ENCODE measurements at regions of chrX and their contacts with region 1.

Region 1: GRCh38 chrX:24259544-24260240 is 54.2 kb downstream of the SUPT20HL2 start:
- DNase-seq: peak; percentile 82
- H3K4me3 ChIP-seq: no peak overlapping the region
- H3K27ac ChIP-seq: no peak overlapping the region
- H3K4me1 ChIP-seq: no peaks in the 10 kb centered on the region
- H3K27me3 ChIP-seq: peaks cover 18% of the 10 kb centered on the region
- CTCF ChIP-seq: peak; percentile 82

Region 2: DNA sequence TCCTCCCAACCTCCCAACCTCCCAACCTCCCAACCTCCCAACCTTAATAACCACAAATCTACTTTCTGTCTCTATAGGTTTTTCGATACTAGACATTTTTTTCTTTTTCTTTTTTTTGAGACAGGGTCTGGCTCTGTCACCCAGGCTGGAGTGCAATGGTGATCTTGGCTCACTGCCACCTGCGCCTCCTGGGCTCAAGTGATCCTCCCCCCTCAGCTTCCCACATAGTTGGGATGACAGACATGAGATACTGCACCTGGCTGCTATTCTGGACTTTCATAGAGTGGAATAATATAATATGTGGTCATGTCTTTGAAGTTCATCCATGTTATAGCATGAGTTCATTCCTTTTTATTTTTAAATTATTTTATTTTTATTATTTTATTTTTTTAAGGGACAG is 149.6 kb before region 1 on chrX:
- CTCF ChIA-PET with region 1: no interaction called
- POLR2A ChIA-PET with region 1: no interaction called
- intact Hi-C with region 1: no loop called
- DNase-seq: no peak
- H3K4me3 ChIP-seq: no peak overlapping the region
- H3K27ac ChIP-seq: no peak overlapping the region
- H3K4me1 ChIP-seq: no peaks in the 10 kb centered on the region
- H3K27me3 ChIP-seq: peaks cover 7% of the 10 kb centered on the region
- CTCF ChIP-seq: no peak

Region 3: GRCh38 chrX:24371391-24371972 is 111.8 kb after region 1 on chrX:
- CTCF ChIA-PET with region 1: interaction called, 12 read pairs
- POLR2A ChIA-PET with region 1: no interaction called
- intact Hi-C with region 1: loop called (anchors 5 kb)
- DNase-seq: peak; percentile 77
- H3K4me3 ChIP-seq: no peak overlapping the region
- H3K27ac ChIP-seq: no peak overlapping the region
- H3K4me1 ChIP-seq: no peaks in the 10 kb centered on the region
- H3K27me3 ChIP-seq: peaks cover 14% of the 10 kb centered on the region
- CTCF ChIP-seq: peak; percentile 78

Region 4: GRCh38 chrX:24498975-24499374 is 239.3 kb after region 1 on chrX:
- CTCF ChIA-PET with region 1: no interaction called
- POLR2A ChIA-PET with region 1: no interaction called
- intact Hi-C with region 1: loop called (anchors 2 kb)
- DNase-seq: no peak
- H3K4me3 ChIP-seq: no peak overlapping the region
- H3K27ac ChIP-seq: no peak overlapping the region
- H3K4me1 ChIP-seq: peaks cover 7% of the 10 kb centered on the region
- H3K27me3 ChIP-seq: peaks cover 10% of the 10 kb centered on the region
- CTCF ChIP-seq: peak; percentile 64

Region 5: DNA sequence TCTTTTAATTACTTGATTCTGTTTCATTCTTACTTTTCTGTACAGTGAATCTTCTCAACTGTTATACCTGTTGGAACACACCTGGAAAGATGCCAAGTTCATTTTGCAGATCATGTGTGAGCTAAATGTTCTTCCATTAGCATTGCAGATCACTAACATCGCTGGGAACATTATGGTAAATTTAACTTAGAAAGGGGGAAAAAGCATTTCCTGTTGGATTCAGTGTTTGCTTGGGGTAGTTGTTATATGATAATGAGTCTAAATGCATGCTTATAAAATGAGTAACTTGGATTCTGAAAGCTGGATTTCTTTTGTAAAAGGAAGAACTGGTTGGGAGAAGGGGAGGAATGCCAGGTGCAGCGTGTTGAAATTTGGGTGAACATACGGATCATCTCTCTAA is 481.6 kb after region 1 on chrX:
- CTCF ChIA-PET with region 1: no interaction called
- POLR2A ChIA-PET with region 1: no interaction called
- intact Hi-C with region 1: loop called (anchors 10 kb)
- DNase-seq: no peak
- H3K4me3 ChIP-seq: no peak overlapping the region
- H3K27ac ChIP-seq: no peak overlapping the region
- H3K4me1 ChIP-seq: no peaks in the 10 kb centered on the region
- H3K27me3 ChIP-seq: peaks cover 11% of the 10 kb centered on the region
- CTCF ChIP-seq: no peak